ENCODE measurements at regions of chr11 and their contacts with region 1.

Region 1: GRCh38 chr11:73625696-73626318 is 20.6 kb upstream of the PLEKHB1 start:
- DNase-seq: peak; percentile 74
- H3K4me3 ChIP-seq: no peak overlapping the region
- H3K27ac ChIP-seq: no peak overlapping the region
- H3K4me1 ChIP-seq: no peaks in the 10 kb centered on the region
- H3K27me3 ChIP-seq: peaks cover 9 to 12% of the 10 kb centered on the region in 2 experiments
- CTCF ChIP-seq: peak; percentile 84 to 85
- POLR2A ChIP-seq: no peak

Region 2: DNA sequence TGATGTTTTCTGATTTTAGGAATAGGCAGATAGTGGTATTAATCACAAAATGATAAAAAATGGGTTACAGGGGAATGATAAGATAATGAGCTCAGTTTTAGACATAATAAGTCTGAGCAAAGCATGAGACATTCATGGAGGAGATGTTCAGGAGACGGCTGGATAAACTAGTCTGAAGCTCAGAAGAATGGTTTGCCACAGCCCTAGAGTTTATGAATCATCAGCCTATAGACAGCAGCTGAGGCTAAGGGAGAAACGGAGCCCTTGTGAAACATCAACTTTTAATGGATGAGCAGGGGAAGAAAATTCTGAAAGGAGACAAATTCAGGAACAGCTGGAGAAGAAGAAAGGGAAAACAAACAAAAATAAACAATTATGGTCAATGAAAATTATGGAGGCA is 162.4 kb before region 1 on chr11:
- CTCF ChIA-PET with region 1: interaction called, 10 read pairs
- POLR2A ChIA-PET with region 1: no interaction called
- dilution Hi-C with region 1: no loop called
- intact Hi-C with region 1: no loop called
- DNase-seq: no peak
- H3K4me3 ChIP-seq: no peak overlapping the region
- H3K27ac ChIP-seq: no peak overlapping the region
- H3K4me1 ChIP-seq: no peaks in the 10 kb centered on the region
- H3K27me3 ChIP-seq: no peaks in the 10 kb centered on the region
- CTCF ChIP-seq: no peak
- POLR2A ChIP-seq: no peak

Region 3: GRCh38 chr11:73521621-73522020 is 104.2 kb before region 1 on chr11:
- CTCF ChIA-PET with region 1: interaction called, 10 read pairs
- POLR2A ChIA-PET with region 1: no interaction called
- dilution Hi-C with region 1: no loop called
- intact Hi-C with region 1: no loop called
- DNase-seq: peak; percentile 51
- H3K4me3 ChIP-seq: no peak overlapping the region
- H3K27ac ChIP-seq: no peak overlapping the region
- H3K4me1 ChIP-seq: peaks cover 19% of the 10 kb centered on the region
- H3K27me3 ChIP-seq: no peaks in the 10 kb centered on the region
- CTCF ChIP-seq: no peak
- POLR2A ChIP-seq: no peak

Region 4: GRCh38 chr11:73597956-73598718 is 27.7 kb before region 1 on chr11 and contains the start of gene FAM168A:
- CTCF ChIA-PET with region 1: interaction called, 11 read pairs
- POLR2A ChIA-PET with region 1: no interaction called
- dilution Hi-C with region 1: no loop called
- intact Hi-C with region 1: no loop called
- DNase-seq: peak; percentile 95
- H3K4me3 ChIP-seq: peak within 1 kb of the TSS; percentile 70 to 97 (median 74)
- H3K27ac ChIP-seq: no peak within 1 kb of the TSS
- H3K4me1 ChIP-seq: peaks cover 9% of the 10 kb centered on the region
- H3K27me3 ChIP-seq: no peaks in the 10 kb centered on the region
- CTCF ChIP-seq: peak; percentile 3 to 10
- POLR2A ChIP-seq: peak; percentile 83
- total RNA-seq, gene FAM168A: 20.5 and 22.5 TPM in 2 replicates

Region 5: DNA sequence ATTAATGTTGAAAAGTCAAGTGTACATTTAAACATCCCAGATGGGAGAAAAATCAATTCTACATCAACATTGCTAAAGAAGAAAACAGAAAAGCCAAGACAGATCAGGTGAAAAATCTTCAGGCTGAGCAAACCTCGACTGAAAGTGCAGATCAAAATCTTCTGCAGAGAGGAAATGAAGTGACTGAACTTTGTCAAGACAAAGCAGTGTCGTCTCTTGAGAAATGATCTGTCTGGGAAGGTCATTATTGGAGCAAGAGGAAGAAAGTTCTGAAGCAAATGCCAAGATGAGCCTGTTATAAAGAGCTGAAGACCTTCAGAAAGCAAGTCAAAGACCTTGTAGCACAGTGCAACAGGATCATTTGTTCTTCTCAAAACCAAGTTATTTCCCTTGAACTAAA is 14.8 kb after region 1 on chr11:
- CTCF ChIA-PET with region 1: interaction called, 47 read pairs
- POLR2A ChIA-PET with region 1: no interaction called
- dilution Hi-C with region 1: no loop called
- intact Hi-C with region 1: no loop called
- DNase-seq: no peak
- H3K4me3 ChIP-seq: no peak overlapping the region
- H3K27ac ChIP-seq: no peak overlapping the region
- H3K4me1 ChIP-seq: no peaks in the 10 kb centered on the region
- H3K27me3 ChIP-seq: peaks cover 11 to 17% of the 10 kb centered on the region in 2 experiments
- CTCF ChIP-seq: no peak
- POLR2A ChIP-seq: no peak

Region 6: DNA sequence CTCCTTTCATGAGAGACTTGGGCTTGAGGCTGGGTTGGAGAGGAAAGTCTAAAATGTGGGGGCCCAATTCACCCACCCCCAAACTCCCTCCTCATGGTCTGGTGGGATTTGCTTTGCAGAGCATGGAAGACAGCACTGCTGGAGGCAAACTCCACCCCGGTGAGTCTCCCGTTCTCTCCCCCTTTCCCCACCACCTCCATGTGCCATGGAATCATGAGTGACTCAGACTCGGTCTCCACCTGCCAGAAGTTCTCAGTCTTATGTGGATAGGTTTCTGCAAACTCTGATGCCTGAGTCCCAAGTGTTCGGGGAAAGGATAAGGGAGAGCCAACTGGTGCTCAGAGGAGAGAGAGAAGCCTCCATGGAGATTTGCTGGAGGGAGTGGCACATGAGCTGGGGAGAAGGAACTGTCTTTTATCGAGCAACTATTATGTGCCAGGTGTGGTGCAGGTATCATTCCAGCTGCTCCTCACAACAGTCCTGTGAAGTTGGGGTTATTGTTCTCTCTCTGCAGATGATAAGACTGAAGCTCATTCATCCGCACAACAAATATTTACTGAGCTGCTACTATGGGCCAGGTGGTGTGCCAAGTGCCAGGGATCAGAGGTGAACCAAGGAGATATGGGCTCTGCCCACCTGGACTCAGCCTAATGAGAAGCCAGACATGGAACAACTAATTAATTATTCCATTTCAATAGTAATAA is 27.2 kb after region 1 on chr11:
- CTCF ChIA-PET with region 1: interaction called, 22 read pairs
- POLR2A ChIA-PET with region 1: no interaction called
- dilution Hi-C with region 1: no loop called
- intact Hi-C with region 1: no loop called
- DNase-seq: no peak
- H3K4me3 ChIP-seq: no peak overlapping the region
- H3K27ac ChIP-seq: no peak overlapping the region
- H3K4me1 ChIP-seq: no peaks in the 10 kb centered on the region
- H3K27me3 ChIP-seq: peaks cover 0 to 8% of the 10 kb centered on the region in 2 experiments
- CTCF ChIP-seq: no peak
- POLR2A ChIP-seq: no peak

Region 7: GRCh38 chr11:73931039-73931645 is 305.3 kb after region 1 on chr11:
- CTCF ChIA-PET with region 1: interaction called, 89 read pairs
- POLR2A ChIA-PET with region 1: no interaction called
- dilution Hi-C with region 1: no loop called
- intact Hi-C with region 1: no loop called
- DNase-seq: peak; percentile 76
- H3K4me3 ChIP-seq: no peak overlapping the region
- H3K27ac ChIP-seq: no peak overlapping the region
- H3K4me1 ChIP-seq: no peaks in the 10 kb centered on the region
- H3K27me3 ChIP-seq: no peaks in the 10 kb centered on the region
- CTCF ChIP-seq: peak; percentile 37 to 55
- POLR2A ChIP-seq: no peak

Measured in endothelial cell of umbilical vein (primary cell).